Activated T-helper 1 cell treated with anti-CD3 and anti-CD28 coated beads, Interleukin-12 subunit alpha, Interleukin-12 subunit beta, Interleukin-2, Interleukin-4 antibody, amounts not matched to agents 30 ng/mL and 10 ng/mL and 1 ng/mL, durations not matched to agents 14 hours and 24 hours and 36 hours (primary cell): ENCODE measurements at regions of chr15 and their contacts with region 1.

Region 1: GRCh38 chr15:82709421-82710207 is at the start of gene AP3B2:
- DNase-seq: peak; percentile 71
- H3K4me3 Mint-ChIP-seq: peak within 1 kb of the TSS; percentile 62
- H3K27ac Mint-ChIP-seq: no peak within 1 kb of the TSS
- H3K4me1 Mint-ChIP-seq: no peaks in the 10 kb centered on the region
- H3K27me3 Mint-ChIP-seq: peaks cover 6% of the 10 kb centered on the region
- total RNA-seq, gene AP3B2: 0.21 TPM in 1 of 2 replicates, not detected in the other

Region 2: DNA sequence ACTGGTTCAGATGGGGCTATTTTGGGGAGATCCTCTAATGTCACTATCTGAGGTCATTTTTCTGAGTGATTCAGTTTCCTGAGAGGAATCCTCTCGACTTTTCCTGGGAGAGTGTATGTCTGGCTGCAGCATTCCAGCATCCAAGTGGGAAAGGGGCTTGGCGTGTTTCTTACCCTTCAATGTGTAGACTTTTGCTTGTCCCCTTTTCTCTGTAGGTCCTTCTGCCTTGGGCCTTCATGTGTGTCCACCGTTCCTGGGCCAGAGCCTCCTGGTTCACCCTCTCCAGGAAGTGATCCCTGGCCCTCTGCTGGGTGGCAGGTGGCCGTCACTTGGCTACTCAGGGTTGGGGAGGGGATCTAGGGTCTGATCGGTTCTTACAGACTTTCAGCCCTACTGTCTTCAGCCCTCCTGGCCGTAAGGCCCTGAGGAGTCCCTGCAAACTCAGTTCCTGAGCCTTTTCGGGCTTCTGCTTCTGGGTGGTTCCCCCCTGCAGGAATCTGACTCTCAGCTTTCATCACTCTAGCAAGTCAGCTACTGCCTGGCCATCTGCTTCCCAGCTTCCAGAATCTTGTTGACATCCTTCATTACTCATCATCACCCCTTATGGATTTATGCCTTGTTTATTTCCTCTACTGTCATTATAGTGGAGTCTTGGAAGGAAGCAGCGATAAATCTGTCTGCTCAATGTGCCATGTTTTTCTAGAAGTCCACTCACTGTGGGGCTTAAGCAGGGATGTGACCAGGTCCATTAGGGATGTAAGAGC is 396.8 kb before region 1 on chr15:
- intact Hi-C with region 1: no loop called
- DNase-seq: no peak
- H3K4me3 Mint-ChIP-seq: no peak overlapping the region
- H3K27ac Mint-ChIP-seq: no peak overlapping the region
- H3K4me1 Mint-ChIP-seq: no peaks in the 10 kb centered on the region
- H3K27me3 Mint-ChIP-seq: peaks cover 9% of the 10 kb centered on the region

Region 3: DNA sequence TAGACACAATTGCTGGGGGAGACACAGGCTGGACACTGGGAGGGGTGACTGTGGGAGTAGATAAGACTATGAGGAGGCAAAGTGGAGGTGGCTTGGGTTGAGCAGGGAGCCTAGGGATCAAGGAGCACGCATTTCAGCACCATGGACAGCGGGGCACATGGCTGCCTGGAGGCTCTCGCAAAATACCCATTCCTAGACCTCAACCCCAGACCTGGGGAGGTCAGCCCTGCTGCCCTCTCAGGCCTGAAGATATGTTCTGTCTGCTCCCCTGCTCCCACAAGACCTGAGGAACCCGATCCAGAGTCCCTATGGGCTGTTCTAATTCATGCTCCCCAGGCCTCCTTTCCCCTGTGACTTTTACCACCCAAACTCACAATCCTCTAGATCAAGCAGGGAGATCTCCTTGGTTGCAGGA is 46.4 kb before region 1 on chr15:
- intact Hi-C with region 1: loop called (anchors 1 kb)
- DNase-seq: peak; percentile 26
- H3K4me3 Mint-ChIP-seq: no peak overlapping the region
- H3K27ac Mint-ChIP-seq: no peak overlapping the region
- H3K4me1 Mint-ChIP-seq: no peaks in the 10 kb centered on the region
- H3K27me3 Mint-ChIP-seq: no peaks in the 10 kb centered on the region

Region 4: DNA sequence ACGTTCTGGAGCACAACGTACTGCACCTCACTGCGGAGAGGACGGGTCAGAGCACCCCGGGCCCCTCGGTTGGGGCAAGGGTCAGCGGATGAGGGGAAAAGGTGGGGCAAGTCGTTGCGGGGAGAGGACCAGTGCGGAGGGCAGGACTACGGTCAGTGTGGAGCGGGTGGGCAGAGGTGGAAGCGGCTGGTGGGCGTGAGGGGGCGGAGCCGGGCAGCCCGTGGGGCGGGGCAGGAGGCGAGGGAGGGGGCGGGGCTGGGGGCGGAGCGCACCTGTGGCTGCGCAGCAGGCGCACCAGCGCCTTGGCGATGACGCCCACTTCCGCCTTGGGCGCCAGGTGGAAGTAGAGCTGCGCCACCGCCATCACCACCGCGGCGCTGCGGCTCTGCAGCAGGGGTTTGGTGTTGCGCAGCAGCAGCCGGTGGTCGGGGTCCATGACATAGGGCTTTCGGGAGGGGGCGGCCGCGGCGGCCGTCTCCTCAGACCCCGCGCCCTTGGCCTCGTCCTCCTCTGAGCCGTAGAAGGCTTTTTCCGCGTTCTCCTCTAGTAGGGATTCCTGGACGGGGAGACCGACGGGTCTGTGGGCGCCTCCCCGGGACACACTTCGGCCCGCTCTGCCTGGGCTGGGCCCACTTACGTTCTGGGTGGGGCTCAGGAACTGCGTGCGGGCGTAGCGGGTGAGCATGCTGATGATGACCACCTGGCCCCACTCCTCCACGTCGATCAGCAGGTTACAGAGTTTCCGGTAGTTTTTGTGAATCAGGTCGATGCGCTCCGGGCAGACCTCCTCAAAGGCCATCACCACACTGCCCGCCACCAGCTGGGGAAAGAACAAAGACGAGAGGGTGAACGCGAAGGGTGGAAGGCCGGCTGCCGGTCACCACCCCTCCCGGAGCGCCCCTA is 29.2 kb before region 1 on chr15:
- intact Hi-C with region 1: loop called (anchors 1 kb)
- DNase-seq: peak; percentile 34
- H3K4me3 Mint-ChIP-seq: peak overlapping the region; percentile 72
- H3K27ac Mint-ChIP-seq: no peak overlapping the region
- H3K4me1 Mint-ChIP-seq: peaks cover 8% of the 10 kb centered on the region
- H3K27me3 Mint-ChIP-seq: peaks cover 19% of the 10 kb centered on the region